Dendritic cell treated with granulocyte-macrophage colony-stimulating factor and Interleukin-4, amounts not matched to agents 40 ng/mL and 50 ng/mL, for 4 days (primary cell): ENCODE measurements at regions of chr18 and their contacts with region 1.

Region 1: DNA sequence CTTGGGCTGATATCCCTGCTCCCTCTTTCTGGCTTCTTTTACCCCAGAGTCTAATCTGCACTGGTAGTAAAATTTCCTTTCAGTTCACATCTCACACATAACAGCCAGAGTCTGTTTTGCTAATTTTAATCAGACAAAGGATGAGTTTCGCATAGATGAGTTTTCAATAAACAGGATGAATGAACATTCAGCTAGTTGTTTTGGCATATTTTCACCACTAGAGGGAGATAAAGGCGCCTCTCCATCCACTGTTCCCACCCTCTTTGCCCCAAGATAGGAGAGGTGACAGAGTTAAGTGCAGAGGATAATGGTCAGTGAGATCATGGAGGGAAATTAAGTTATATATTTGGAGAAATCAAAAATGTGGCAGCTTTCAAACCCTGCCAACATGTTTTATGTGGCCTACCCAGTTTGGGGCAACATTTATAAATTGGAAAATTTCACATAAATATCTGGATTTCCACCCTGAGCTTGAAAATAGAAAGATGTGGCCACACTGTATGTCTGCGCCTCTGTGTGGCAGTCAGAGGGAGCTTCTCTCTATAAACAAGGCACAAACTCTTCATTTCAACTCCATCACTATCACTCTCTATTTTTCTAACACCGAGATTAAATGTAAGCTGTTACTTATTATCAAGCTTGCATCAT is 48.5 kb upstream of the DTNA start:
- H3K4me3 Mint-ChIP-seq: no peak overlapping the region
- H3K27ac Mint-ChIP-seq: no peak overlapping the region
- H3K4me1 Mint-ChIP-seq: peaks cover 10% of the 10 kb centered on the region
- H3K27me3 Mint-ChIP-seq: no peaks in the 10 kb centered on the region

Region 2: GRCh38 chr18:34493099-34493544 is 168.5 kb before region 1 on chr18:
- intact Hi-C with region 1: loop called (anchors 5 kb)
- H3K4me3 Mint-ChIP-seq: peak overlapping the region; percentile 78
- H3K27ac Mint-ChIP-seq: peak overlapping the region; percentile 74
- H3K4me1 Mint-ChIP-seq: peaks cover 31% of the 10 kb centered on the region
- H3K27me3 Mint-ChIP-seq: peaks cover 37% of the 10 kb centered on the region